SK-N-SH (cell line): ENCODE measurements at regions of chr2 and their contacts with region 1.

Region 1: GRCh38 chr2:101238930-101239759 is 13.5 kb upstream of the CNOT11 start:
- DNase-seq: no peak
- H3K4me3 ChIP-seq: no peak overlapping the region
- H3K27ac ChIP-seq: no peak overlapping the region
- H3K4me1 ChIP-seq: no peaks in the 10 kb centered on the region
- H3K27me3 ChIP-seq: no peaks in the 10 kb centered on the region
- CTCF ChIP-seq: no peak
- EP300 ChIP-seq: no peak
- RAD21 ChIP-seq: no peak

Region 2: GRCh38 chr2:101252408-101253012 is 13.4 kb after region 1 on chr2 and contains the start of gene CNOT11:
- CTCF ChIA-PET with region 1: interaction called, 25 read pairs
- POLR2A ChIA-PET with region 1: no interaction called
- DNase-seq: peak; percentile 97
- H3K4me3 ChIP-seq: peak within 1 kb of the TSS; percentile 79 to 100
- H3K27ac ChIP-seq: peak within 1 kb of the TSS; percentile 79 to 86
- H3K4me1 ChIP-seq: peaks cover 4 to 18% of the 10 kb centered on the region in 2 experiments; a peak in 1 of 4 replicates
- H3K27me3 ChIP-seq: no peaks in the 10 kb centered on the region
- CTCF ChIP-seq: no peak
- EP300 ChIP-seq: 0 out of 4 replicates have a peak, but pooled peaks of 1 of the 2 experiments have one; percentile 9
- RAD21 ChIP-seq: no peak
- polyA plus RNA-seq, gene CNOT11: 38.4 and 42.2 TPM in 2 replicates

Region 3: GRCh38 chr2:101751875-101752619 is 512.9 kb after region 1 on chr2:
- CTCF ChIA-PET with region 1: no interaction called
- POLR2A ChIA-PET with region 1: no interaction called
- DNase-seq: no peak
- H3K4me3 ChIP-seq: no peak overlapping the region
- H3K27ac ChIP-seq: peak overlapping the region; percentile 39 to 57
- H3K4me1 ChIP-seq: peaks cover 28 to 53% of the 10 kb centered on the region in 2 experiments
- H3K27me3 ChIP-seq: no peaks in the 10 kb centered on the region
- CTCF ChIP-seq: no peak
- EP300 ChIP-seq: no peak
- RAD21 ChIP-seq: no peak